Right cardiac atrium (tissue), 5 donors: ENCODE measurements at regions of chr6 and their contacts with region 1.

Region 1: DNA sequence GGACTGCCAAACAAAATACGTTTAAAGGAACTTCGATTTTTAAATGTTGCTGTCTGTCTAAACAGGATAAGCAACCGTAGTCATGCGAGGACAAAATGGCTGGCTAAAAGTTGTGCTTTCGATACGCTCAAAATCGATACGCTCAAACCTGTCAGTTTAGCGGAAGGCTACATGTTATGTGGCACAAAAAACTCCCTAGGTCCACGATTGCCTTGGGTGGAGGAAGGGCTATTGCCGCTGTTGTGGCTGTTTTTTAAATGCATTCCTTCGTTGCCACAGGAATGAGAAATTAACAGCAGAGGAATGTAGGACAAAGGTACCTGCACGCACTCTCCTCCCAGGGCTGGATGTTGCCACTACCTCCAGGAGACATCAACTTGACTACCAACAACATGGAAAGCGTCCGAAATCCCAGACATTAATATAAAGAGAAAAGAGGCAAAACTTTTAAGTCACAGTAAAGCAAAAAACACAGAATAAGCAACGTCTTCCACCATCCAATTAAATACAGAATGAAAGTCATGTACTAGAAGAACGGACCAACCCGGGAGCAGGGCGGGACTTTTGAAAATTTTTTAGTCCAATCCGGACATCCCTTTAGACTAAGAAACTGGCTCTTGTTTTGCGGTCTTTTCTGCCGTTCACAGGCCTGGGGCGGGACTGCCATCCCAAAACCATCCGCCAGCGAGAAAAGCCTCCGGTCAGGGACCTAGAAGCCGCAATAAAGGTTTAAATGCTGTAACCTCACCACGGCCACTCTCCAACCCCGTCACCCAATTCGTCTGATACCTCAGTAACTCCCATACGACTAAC is 32.2 kb upstream of the HFE start:
- DNase-seq: peak; percentile 85 to 89 (median 89)
- ATAC-seq: peak; percentile 89 to 93
- H3K4me3 ChIP-seq: peak overlapping the region; percentile 86
- H3K27ac ChIP-seq: peak overlapping the region; percentile 99
- H3K4me1 ChIP-seq: no peaks in the 10 kb centered on the region
- H3K27me3 ChIP-seq: no peaks in the 10 kb centered on the region

Region 2: DNA sequence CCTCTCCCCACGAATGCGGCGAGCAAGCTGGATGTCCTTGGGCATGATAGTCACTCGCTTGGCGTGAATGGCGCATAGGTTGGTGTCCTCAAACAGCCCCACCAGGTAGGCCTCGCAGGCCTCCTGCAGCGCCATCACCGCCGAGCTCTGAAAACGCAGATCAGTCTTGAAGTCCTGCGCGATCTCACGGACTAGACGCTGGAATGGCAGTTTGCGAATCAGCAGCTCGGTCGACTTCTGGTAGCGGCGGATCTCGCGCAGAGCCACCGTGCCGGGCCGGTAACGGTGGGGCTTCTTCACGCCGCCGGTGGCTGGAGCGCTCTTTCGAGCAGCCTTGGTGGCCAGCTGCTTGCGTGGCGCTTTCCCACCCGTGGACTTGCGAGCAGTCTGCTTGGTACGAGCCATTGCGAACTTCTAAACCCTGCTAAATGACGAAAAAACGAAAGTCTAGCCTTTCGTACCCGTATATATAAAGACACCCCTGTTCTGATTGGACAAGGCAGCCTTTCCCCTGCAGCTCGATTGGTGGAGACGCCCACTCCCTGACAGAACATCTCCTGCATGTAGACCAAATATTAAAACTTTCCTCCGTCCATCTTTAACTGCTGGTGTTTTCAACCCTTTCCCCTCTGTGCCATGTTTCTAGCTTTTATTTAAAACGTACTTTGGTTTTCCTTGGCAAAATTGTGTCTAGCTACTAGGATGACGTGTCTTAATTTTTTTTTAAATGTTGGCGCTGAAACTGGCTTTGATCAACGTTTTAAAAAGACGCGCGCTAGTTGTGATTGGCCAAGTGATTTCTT is 142.0 kb after region 1 on chr6:
- intact Hi-C with region 1: loop called in 1 of 4 experiments (anchors 10 kb)
- DNase-seq: peak; percentile 77 to 87 (median 83)
- ATAC-seq: peak; percentile 79 to 82
- H3K4me3 ChIP-seq: peak overlapping the region; percentile 82
- H3K27ac ChIP-seq: peak overlapping the region; percentile 99
- H3K4me1 ChIP-seq: peaks cover 5% of the 10 kb centered on the region
- H3K27me3 ChIP-seq: no peaks in the 10 kb centered on the region